Caco-2 (cell line): ENCODE measurements at regions of chr12 and their contacts with region 1.

Region 1: DNA sequence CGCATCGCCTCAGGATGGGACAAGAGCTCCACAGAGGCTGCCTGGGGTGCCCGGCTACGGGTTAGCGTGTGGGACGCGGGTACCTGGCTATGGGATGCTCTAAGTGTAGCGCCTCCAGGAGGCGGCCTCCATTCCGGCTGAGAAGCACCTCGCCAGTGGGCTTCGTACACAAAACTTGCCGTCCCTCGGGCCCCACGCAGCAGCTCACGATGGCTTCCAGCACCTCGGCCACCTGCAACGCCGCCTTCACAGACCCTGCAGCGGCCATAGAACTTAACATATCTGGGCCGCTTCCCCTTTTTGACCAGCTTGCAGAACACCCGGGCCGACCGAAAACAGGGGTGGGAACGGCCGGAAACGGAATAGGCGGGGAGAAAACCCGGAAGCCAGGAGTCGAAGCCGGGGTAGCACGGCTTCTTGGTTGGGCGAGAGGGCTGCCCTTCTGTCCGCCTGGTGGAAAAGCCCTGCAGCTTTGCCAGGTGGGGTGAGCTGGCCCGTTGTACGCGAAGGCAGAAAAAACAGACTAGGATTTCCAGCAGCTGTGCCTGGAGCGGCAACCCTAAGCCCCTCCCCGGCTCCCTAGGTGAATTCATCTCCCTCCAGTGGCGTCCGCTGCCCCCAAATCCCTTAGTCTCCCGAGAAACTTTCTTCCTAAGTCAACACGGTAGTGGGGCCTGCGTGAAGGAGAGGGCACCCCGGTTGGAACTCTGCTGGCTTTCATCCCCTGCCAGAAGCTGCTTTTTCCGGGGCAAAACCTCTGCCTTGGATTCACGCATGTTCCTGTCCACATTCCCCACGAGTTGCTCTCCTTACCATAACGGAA is at the start of gene BBS10:
- DNase-seq: peak; percentile 91
- H3K4me3 ChIP-seq: peak within 1 kb of the TSS; percentile 57
- H3K4me3 Mint-ChIP-seq: peak within 1 kb of the TSS; percentile 82
- H3K27ac Mint-ChIP-seq: peak within 1 kb of the TSS; percentile 83
- H3K4me1 ChIP-seq: peaks cover 5% of the 10 kb centered on the region; the same call in 1 of the 2 replicates
- H3K4me1 Mint-ChIP-seq: peaks cover 9% of the 10 kb centered on the region
- H3K27me3 ChIP-seq: no peaks in the 10 kb centered on the region; the same call in 1 of the 2 replicates
- H3K27me3 Mint-ChIP-seq: no peaks in the 10 kb centered on the region
- CTCF ChIP-seq: peak; percentile 40 to 63
- total RNA-seq, gene BBS10: 6.0 and 6.3 TPM in 2 replicates

Region 2: GRCh38 chr12:75526655-75527511 is 821.4 kb before region 1 on chr12:
- CTCF ChIA-PET with region 1: no interaction called
- POLR2A ChIA-PET with region 1: no interaction called
- intact Hi-C with region 1: loop called (anchors 5 kb)
- DNase-seq: peak; percentile 28 to 37
- H3K4me3 ChIP-seq: no peak overlapping the region
- H3K4me3 Mint-ChIP-seq: no peak overlapping the region
- H3K27ac Mint-ChIP-seq: no peak overlapping the region
- H3K4me1 ChIP-seq: no peaks in the 10 kb centered on the region
- H3K4me1 Mint-ChIP-seq: peaks cover 17% of the 10 kb centered on the region
- H3K27me3 ChIP-seq: no peaks in the 10 kb centered on the region
- H3K27me3 Mint-ChIP-seq: peaks cover 2% of the 10 kb centered on the region
- CTCF ChIP-seq: peak; percentile 75 to 77

Region 3: GRCh38 chr12:76037130-76038103 is 310.9 kb before region 1 on chr12:
- CTCF ChIA-PET with region 1: interaction called, 5 read pairs
- POLR2A ChIA-PET with region 1: interaction called, 3 read pairs
- intact Hi-C with region 1: loop called (anchors 5 kb)
- DNase-seq: peak; percentile 53 to 66
- H3K4me3 ChIP-seq: no peak overlapping the region
- H3K4me3 Mint-ChIP-seq: no peak overlapping the region
- H3K27ac Mint-ChIP-seq: peak overlapping the region; percentile 16
- H3K4me1 ChIP-seq: peaks cover 38% of the 10 kb centered on the region
- H3K4me1 Mint-ChIP-seq: peaks cover 41% of the 10 kb centered on the region
- H3K27me3 ChIP-seq: no peaks in the 10 kb centered on the region
- H3K27me3 Mint-ChIP-seq: no peaks in the 10 kb centered on the region
- CTCF ChIP-seq: peak; percentile 66 to 77

Region 4: GRCh38 chr12:76158518-76159321 is 189.6 kb before region 1 on chr12:
- CTCF ChIA-PET with region 1: no interaction called
- POLR2A ChIA-PET with region 1: no interaction called
- intact Hi-C with region 1: loop called (anchors 2 kb)
- DNase-seq: peak; percentile 44 to 61
- H3K4me3 ChIP-seq: no peak overlapping the region
- H3K4me3 Mint-ChIP-seq: no peak overlapping the region
- H3K27ac Mint-ChIP-seq: no peak overlapping the region
- H3K4me1 ChIP-seq: no peaks in the 10 kb centered on the region
- H3K4me1 Mint-ChIP-seq: peaks cover 8% of the 10 kb centered on the region
- H3K27me3 ChIP-seq: no peaks in the 10 kb centered on the region
- H3K27me3 Mint-ChIP-seq: no peaks in the 10 kb centered on the region
- CTCF ChIP-seq: peak; percentile 66 to 67

Region 5: GRCh38 chr12:76559400-76560085 is 211.3 kb after region 1 on chr12 and contains the start of gene OSBPL8:
- CTCF ChIA-PET with region 1: no interaction called
- POLR2A ChIA-PET with region 1: no interaction called
- intact Hi-C with region 1: loop called (anchors 1 kb)
- DNase-seq: peak; percentile 95
- H3K4me3 ChIP-seq: peak within 1 kb of the TSS; percentile 70
- H3K4me3 Mint-ChIP-seq: peak within 1 kb of the TSS; percentile 94
- H3K27ac Mint-ChIP-seq: peak within 1 kb of the TSS; percentile 71
- H3K4me1 ChIP-seq: 0 out of 2 replicates have a peak, but pooled peaks cover 4% of the 10 kb centered on the region
- H3K4me1 Mint-ChIP-seq: no peaks in the 10 kb centered on the region
- H3K27me3 ChIP-seq: no peaks in the 10 kb centered on the region
- H3K27me3 Mint-ChIP-seq: no peaks in the 10 kb centered on the region
- CTCF ChIP-seq: peak in 1 of 2 experiments; percentile 10
- total RNA-seq, gene OSBPL8: 49.3 and 50.0 TPM in 2 replicates